Endothelial cell of umbilical vein (primary cell): ENCODE measurements at regions of chr6 and their contacts with region 1.

Region 1: GRCh38 chr6:118387764-118388701 is 160.1 kb upstream of the PLN start:
- DNase-seq: peak; percentile 97
- H3K4me3 ChIP-seq: no peak overlapping the region
- H3K27ac ChIP-seq: peak overlapping the region; percentile 81
- H3K4me1 ChIP-seq: peaks cover 24% of the 10 kb centered on the region
- H3K27me3 ChIP-seq: no peaks in the 10 kb centered on the region
- CTCF ChIP-seq: no peak
- POLR2A ChIP-seq: peak; percentile 50

Region 2: GRCh38 chr6:118370722-118371121 is 17.3 kb before region 1 on chr6:
- CTCF ChIA-PET with region 1: no interaction called
- POLR2A ChIA-PET with region 1: no interaction called
- dilution Hi-C with region 1: no loop called
- intact Hi-C with region 1: no loop called
- DNase-seq: no peak
- H3K4me3 ChIP-seq: no peak overlapping the region
- H3K27ac ChIP-seq: no peak overlapping the region
- H3K4me1 ChIP-seq: no peaks in the 10 kb centered on the region
- H3K27me3 ChIP-seq: no peaks in the 10 kb centered on the region
- CTCF ChIP-seq: no peak
- POLR2A ChIP-seq: no peak

Region 3: GRCh38 chr6:118468682-118469465 is 80.8 kb after region 1 on chr6:
- CTCF ChIA-PET with region 1: interaction called, 3 read pairs
- POLR2A ChIA-PET with region 1: no interaction called
- dilution Hi-C with region 1: no loop called
- intact Hi-C with region 1: loop called (anchors 5 kb)
- DNase-seq: peak; percentile 86
- H3K4me3 ChIP-seq: no peak overlapping the region
- H3K27ac ChIP-seq: peak overlapping the region; percentile 12
- H3K4me1 ChIP-seq: peaks cover 14% of the 10 kb centered on the region
- H3K27me3 ChIP-seq: no peaks in the 10 kb centered on the region
- CTCF ChIP-seq: no peak
- POLR2A ChIP-seq: no peak

Region 4: GRCh38 chr6:118542184-118542952 is 154.3 kb after region 1 on chr6:
- CTCF ChIA-PET with region 1: no interaction called
- POLR2A ChIA-PET with region 1: no interaction called
- dilution Hi-C with region 1: no loop called
- intact Hi-C with region 1: loop called (anchors 5 kb)
- DNase-seq: no peak
- H3K4me3 ChIP-seq: no peak overlapping the region
- H3K27ac ChIP-seq: no peak overlapping the region
- H3K4me1 ChIP-seq: peaks cover 16% of the 10 kb centered on the region
- H3K27me3 ChIP-seq: no peaks in the 10 kb centered on the region
- CTCF ChIP-seq: no peak
- POLR2A ChIP-seq: no peak